Calu3 (cell line): ENCODE measurements at regions of chr16 and their contacts with region 1.

Region 1: DNA sequence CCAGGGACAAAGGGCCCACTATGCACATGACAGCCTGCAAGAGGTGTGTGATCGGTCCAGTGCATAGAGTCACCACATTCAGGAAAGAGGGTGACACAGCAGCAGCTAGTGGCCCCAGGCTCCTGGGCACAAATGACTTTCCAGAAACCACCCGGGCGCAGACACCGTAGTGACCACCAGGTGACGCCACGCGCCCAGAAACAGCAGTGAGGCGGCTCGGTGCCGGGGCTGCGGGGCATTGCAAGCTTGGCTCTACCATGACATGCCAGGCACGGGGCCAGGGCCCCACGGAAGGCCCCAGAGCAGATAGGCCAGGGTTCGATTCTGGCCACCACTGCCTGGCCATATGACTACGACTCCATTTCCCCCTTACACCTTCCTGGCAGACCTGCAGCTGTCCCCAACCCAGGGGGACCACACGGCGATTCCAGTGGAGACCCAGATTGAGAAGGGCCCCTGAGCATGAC is 6.7 kb downstream of the RHBDF1 start:
- DNase-seq: peak; percentile 94
- H3K4me3 Mint-ChIP-seq: no peak overlapping the region
- H3K27ac Mint-ChIP-seq: no peak overlapping the region
- H3K4me1 Mint-ChIP-seq: peaks cover 19% of the 10 kb centered on the region
- H3K27me3 Mint-ChIP-seq: no peaks in the 10 kb centered on the region
- CTCF ChIP-seq: peak; percentile 96

Region 2: GRCh38 chr16:96935-97381 is 31.3 kb after region 1 on chr16:
- CTCF ChIA-PET with region 1: interaction called, 47 read pairs
- intact Hi-C with region 1: loop called (anchors 2 kb)
- DNase-seq: peak; percentile 94
- H3K4me3 Mint-ChIP-seq: no peak overlapping the region
- H3K27ac Mint-ChIP-seq: no peak overlapping the region
- H3K4me1 Mint-ChIP-seq: no peaks in the 10 kb centered on the region
- H3K27me3 Mint-ChIP-seq: no peaks in the 10 kb centered on the region
- CTCF ChIP-seq: peak; percentile 99

Region 3: DNA sequence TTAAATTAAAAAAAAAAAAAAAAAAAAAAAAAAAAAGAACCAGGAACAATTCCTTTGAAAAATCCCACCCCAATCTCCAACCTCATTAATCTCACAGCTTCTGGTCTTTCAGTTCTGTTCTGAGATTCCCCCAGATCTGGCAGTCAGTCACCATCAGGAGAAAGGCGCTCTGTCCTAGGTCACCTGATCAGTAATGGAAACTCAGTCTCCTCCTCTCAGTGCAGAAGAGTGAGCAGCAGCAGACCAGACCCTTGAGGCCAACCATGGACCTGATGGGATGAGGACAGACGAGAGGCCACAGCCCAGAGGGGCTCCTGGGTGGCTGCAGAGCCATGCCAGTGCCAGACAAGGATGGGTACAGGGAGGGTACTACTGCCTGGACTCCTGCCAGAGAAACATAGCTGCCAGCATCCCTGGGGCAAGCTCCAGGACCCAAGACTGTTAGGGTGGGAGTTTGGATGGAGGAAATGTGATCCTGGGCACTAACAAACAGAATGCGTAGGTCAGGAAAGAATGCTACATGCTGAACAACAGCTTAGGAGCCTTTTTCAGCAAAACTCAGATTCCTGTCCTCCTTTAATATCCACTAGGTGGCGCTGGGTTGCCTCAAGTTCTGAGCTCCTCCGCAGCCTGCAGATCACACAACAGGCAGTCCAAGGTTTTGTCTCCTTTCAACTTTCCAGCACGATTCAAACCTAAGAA is 41.1 kb after region 1 on chr16:
- CTCF ChIA-PET with region 1: interaction called, 11 read pairs
- intact Hi-C with region 1: no loop called
- DNase-seq: peak; percentile 66
- H3K4me3 Mint-ChIP-seq: no peak overlapping the region
- H3K27ac Mint-ChIP-seq: no peak overlapping the region
- H3K4me1 Mint-ChIP-seq: no peaks in the 10 kb centered on the region
- H3K27me3 Mint-ChIP-seq: no peaks in the 10 kb centered on the region
- CTCF ChIP-seq: peak; percentile 88

Region 4: DNA sequence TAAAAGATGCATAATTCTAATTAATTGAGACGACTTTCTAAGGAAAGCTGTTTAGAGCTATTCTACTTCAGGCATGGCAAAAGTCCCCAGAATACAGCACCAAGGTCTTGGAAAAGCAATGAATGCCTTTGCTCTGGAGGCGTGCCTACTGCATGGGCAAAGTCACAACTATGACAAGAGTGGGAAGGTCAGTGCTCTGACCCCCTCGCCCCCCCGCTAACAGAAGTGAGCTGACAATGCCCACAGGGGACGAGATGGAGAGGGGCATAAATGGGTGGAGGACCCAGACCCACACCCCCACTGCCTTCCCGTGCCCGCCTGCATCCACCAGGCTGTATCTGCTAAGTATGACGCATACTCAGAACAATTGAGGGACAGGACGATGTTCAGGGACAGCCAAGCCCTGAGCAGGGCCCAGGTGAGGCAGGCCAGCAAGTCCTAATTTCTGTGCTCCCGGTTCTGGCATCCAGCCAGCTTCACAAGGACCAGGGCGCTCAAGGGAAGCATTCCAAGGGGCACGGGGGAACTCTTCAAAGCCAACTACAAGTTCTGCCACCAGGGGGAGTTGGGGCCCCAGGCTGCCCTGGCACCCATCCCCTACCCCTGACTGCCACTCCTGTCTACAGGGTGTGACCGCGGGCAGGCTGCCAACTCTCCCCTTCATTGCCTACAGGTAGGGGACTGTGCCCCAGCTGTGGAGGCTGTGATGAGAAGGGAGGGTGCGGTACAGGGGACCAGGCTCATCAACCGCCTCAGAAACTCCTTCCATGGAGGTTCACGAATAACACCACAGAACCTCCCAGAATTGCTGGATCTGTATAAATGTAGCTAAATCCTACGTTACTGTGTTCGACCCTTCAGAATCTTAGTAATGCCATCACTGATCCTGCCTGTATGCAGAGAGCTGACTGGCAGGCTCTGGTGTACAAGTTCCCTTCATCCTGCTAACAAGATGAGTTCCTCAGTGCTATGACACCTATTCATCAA is 52.0 kb after region 1 on chr16:
- CTCF ChIA-PET with region 1: interaction called, 12 read pairs
- intact Hi-C with region 1: no loop called
- DNase-seq: peak; percentile 92
- H3K4me3 Mint-ChIP-seq: no peak overlapping the region
- H3K27ac Mint-ChIP-seq: no peak overlapping the region
- H3K4me1 Mint-ChIP-seq: peaks cover 11% of the 10 kb centered on the region
- H3K27me3 Mint-ChIP-seq: no peaks in the 10 kb centered on the region
- CTCF ChIP-seq: peak; percentile 95

Region 5: GRCh38 chr16:361872-362701 is 296.4 kb after region 1 on chr16:
- CTCF ChIA-PET with region 1: interaction called, 10 read pairs
- intact Hi-C with region 1: no loop called
- DNase-seq: peak; percentile 91
- H3K4me3 Mint-ChIP-seq: peak overlapping the region; percentile 10
- H3K27ac Mint-ChIP-seq: no peak overlapping the region
- H3K4me1 Mint-ChIP-seq: no peaks in the 10 kb centered on the region
- H3K27me3 Mint-ChIP-seq: peaks cover 20% of the 10 kb centered on the region
- CTCF ChIP-seq: peak; percentile 89